Cardiac septum (tissue), 1 donor: ENCODE measurements at regions of chr18 and their contacts with region 1.

Region 1: GRCh38 chr18:63422087-63422809 is at the start of gene VPS4B:
- DNase-seq: peak; percentile 100
- total RNA-seq, gene VPS4B: 22.4 TPM

Region 2: DNA sequence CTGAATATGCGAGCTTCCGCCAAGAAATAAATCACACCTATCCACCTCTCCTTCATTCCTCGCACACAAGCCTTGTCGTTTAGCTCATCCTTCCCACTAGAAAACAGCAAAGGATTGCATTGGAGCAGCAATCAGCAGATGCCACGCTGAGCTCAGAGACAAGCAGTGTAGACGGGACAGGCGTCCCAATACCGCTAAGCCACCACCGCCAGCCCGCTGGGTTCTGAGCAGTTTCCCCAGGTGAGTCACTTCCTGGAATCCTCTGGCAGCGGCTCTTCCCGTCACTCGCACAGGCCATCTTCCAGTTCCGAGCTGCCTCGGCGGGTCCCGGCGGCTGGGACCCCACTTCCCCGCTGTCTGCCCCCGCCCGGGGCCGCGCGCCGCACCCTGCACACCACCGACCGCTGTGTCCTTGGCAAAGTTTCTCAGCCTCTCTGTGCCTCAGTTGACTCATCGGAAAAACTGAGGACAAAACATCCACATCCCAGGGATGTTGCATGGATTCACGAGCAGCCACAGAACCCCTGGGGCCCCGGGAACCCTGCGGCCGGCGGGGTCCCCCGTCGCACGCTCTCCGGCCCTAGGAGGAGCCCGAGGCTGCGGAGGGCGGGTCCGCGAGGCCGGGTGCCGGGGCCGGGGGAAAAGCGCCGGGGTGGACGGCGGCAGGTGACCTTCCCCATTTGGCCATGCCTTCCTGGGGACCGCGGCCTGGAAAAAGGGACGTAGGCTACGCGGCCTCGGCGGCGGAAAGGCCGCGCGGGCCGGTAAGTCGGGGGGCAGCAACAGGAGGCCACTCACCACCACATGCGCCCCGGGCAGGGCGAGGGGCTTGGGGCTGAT is 55.8 kb before region 1 on chr18:
- intact Hi-C with region 1: loop called (anchors 1 kb)
- DNase-seq: peak; percentile 83